ENCODE measurements at regions of chr6 and their contacts with region 1.

Region 1: DNA sequence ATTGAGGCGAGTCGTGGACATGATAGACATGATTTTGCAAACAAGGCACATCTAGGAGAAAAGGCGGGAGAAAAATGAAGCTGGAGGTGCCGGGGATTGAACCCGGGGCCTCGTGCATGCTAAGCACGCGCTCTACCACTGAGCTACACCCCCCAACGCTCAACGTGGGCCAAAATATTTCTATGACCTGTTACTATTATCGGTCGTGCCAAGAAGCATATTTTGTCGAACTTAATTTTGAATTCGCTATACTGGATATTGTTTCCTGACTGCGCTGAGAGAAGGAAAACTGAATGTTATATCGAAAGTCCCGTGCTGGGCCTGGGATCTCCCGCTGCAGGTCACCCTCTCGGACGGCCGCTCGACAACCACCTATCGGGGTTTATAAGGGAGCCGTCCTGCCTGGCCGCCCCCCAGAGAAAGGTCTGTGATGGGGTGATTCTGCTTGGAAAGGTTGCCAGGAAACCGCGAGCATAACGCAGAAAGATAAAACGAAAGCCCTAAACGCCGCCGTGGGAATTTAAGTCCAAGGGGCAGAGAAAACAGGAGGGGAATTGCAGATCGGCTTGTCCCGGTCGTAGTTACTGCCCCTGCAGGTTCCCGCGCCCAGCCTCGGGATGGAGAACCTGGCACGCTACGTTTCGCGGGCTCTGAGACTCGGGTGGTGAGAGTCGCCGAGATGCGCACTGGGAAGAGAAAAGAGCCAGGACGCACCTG is 60.0 kb downstream of the TRIM27 start:
- DNase-seq: peak; percentile 49

Region 2: GRCh38 chr6:28632326-28632851 is 231.4 kb before region 1 on chr6:
- CTCF ChIA-PET with region 1: no interaction called
- POLR2A ChIA-PET with region 1: no interaction called
- DNase-seq: no peak

Region 3: DNA sequence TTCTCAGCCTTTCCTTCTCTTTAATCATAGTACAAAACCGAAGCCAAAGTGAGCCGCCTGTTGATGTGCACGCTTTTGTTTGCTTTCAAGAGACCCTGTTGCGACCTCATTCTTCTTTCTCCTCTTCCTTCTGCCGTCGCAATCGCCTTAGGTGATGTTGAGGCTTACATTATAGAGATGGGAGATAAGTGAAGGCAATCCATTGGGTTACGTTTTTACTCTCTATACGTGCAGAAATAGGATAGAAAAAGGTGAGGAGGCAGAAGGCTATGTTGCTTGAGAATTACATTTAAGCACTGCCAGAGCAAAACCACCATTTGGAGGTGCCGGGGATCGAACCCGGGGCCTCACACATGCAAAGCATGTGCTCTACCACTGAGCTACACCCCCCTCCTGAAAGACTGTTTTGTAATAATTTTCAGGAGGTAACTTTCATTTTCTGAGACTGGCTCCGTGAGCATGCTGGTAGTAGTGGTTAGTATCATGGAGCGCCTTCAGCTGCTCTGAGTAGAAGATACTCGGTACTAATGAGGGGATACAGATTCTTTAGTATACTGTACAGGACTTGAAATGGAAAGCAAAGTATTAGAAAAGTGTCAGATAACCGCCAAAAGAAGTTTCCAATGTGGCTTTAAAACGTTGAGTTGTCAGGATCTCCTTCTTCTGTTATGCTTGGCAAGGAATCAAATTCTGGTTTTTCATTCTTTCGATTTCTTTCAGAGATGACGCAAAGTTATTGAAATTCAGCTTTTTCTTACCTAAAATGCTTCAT is 105.5 kb before region 1 on chr6:
- CTCF ChIA-PET with region 1: no interaction called
- POLR2A ChIA-PET with region 1: interaction called, 11 read pairs
- DNase-seq: no peak

Region 4: DNA sequence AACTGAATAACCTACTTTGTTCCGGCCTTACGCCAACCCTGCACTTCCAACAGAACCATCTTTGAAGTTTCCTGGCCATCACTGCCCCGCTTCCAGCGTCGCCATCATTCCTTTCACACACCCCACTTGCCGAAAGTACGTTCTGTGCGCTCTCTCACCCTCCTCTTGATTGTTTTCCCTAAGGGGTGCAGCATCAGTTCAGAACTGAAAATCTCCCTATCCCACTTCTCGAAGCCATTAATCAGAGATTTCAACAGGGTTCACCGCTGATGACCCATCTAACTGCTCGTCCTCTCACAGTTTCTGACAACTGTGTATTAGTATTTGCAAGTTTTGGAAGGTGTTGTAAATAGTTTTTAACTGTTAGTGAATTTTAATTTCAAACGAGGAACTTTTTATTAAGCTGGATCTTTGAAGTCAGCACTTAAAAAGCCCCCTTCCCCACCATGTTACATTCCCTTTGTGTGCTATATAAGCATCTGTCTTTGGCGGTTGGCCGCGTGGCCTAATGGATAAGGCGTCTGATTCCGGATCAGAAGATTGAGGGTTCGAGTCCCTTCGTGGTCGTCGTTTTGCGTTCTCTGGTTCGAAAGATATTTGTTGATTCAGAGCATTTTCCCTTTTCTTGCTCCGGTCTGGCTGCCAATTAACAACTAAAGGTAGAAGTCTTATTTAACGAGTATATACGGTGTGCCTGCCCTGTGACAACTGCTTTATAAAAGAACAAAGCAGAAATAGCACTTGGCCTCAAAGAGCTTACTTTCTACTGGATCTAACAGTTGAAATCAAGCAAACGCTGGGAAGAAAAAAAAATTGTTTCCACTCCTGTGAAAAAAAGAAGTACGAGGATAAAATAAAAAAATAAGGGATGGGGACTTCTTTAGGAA is 17.4 kb after region 1 on chr6:
- CTCF ChIA-PET with region 1: interaction called, 3 read pairs
- POLR2A ChIA-PET with region 1: interaction called, 13 read pairs
- DNase-seq: peak; percentile 61

Region 5: DNA sequence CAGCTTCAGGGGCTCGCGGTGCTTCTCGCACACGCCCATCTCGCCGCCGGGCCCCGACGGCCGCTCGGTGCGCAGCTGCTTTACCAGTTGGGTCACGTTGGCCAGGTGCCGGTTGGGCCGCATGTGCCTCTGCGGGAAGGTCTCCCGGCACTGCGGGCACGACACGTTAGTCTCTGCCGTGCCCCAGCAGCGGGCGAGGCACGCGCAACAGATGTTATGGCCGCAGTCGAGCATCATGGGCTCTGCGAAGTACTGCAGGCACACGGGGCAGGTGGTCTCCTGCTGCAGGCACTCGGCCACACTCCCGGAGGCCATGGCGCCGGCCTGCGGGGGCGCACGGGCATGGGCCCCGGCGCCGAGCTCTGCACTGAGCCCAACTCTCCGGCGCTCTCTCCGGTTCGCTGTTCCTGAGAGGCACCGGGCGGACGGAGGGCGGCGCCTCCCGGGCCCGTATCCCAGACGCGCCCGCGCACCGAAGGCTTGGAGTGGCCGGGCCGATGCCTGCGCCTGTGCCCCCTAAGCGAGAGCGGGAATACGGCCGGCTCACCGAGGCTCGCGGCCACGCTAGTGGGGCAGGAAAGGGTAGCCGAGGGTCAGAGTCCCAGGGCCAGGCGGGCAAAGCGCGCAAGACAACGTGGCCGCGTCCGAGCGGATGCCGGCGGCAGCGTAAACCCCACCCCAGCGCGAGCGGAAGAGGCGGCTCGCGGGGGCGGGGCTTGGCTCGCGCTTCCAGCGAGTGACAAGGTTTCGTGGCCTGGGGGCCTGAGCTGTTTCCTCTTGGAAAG is 59.7 kb after region 1 on chr6 and contains the start of gene TRIM27:
- CTCF ChIA-PET with region 1: no interaction called
- POLR2A ChIA-PET with region 1: interaction called, 18 read pairs
- DNase-seq: peak; percentile 86

Measured in HEK293T (cell line).